ENCODE measurements at regions of chr17 and their contacts with region 1.

Region 1: GRCh38 chr17:40362696-40363110 is 1.8 kb downstream of the GJD3 start:
- DNase-seq: peak; percentile 95
- ATAC-seq: peak; percentile 91
- H3K4me3 Mint-ChIP-seq: peak overlapping the region; percentile 67
- H3K27ac Mint-ChIP-seq: no peak overlapping the region
- H3K4me1 Mint-ChIP-seq: peaks cover 20% of the 10 kb centered on the region
- H3K27me3 Mint-ChIP-seq: peaks cover 10% of the 10 kb centered on the region

Region 2: DNA sequence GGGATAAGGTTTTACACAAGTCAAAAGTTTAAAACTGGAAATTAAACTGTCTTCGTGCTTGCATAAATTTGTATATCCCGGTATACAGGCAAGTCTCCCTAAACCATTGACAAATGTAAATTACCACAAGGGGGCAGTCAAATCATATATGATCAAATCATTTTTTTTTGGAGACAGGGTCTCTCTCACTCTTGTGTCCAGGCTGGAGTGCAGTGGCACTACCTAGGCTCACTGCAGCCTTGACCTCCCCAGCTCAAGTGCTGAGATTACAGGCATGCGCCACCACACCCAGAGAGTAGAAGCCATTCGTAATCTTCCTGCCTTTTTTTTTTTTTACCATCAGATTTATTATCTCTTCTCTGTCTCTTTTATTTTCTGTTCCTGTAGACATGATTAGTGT is 36.5 kb after region 1 on chr17:
- CTCF ChIA-PET with region 1: interaction called, 3 read pairs
- POLR2A ChIA-PET with region 1: no interaction called
- intact Hi-C with region 1: loop called in 1 of 2 experiments (anchors 5 kb)
- DNase-seq: no peak
- ATAC-seq: peak; percentile 47
- H3K4me3 Mint-ChIP-seq: no peak overlapping the region
- H3K27ac Mint-ChIP-seq: no peak overlapping the region
- H3K4me1 Mint-ChIP-seq: peaks cover 12% of the 10 kb centered on the region
- H3K27me3 Mint-ChIP-seq: no peaks in the 10 kb centered on the region

Region 3: DNA sequence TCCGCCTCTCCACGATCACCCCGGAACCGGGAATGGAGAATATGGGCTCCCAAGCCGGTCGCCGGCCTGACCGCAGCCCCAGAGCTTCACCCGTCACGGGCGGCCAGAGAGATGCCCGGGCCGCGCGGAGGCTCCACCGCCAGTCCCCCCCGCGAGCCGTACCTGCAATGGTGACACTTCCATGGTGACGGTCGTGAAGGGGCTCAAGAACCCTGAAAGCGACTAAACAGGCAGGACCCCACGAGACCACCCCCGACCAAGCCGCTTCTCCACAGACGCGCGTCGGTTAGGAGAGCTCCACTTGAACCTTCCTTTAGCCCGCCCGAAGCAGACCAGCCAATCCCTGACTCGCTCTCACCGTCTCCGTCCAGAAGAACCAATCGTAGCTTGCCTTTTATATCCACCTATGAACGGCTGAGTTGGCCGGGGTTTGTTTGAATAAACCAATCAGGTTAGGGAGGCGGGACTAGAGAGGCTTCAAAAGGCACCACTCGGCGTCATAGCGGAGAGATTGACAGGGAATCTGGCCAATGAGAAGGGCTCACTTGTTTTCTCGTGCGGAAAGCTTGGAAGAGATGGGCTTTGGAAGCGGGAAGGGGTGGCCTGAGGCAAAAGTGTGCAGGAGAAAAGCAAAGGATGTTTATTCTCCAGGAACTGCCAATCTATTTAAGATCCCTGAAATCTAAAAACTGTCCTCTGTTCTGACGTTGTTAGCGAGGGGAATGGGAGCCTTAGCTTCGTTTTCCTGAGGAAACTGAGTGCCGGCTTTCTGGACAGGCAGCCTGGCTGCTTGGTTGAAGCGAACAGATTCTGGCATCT is 55.1 kb after region 1 on chr17 and contains the start of gene TOP2A:
- CTCF ChIA-PET with region 1: interaction called, 13 read pairs
- POLR2A ChIA-PET with region 1: interaction called, 6 read pairs
- intact Hi-C with region 1: loop called (anchors 1 kb)
- DNase-seq: peak; percentile 95
- ATAC-seq: peak; percentile 99
- H3K4me3 Mint-ChIP-seq: peak within 1 kb of the TSS; percentile 86
- H3K27ac Mint-ChIP-seq: peak within 1 kb of the TSS; percentile 89
- H3K4me1 Mint-ChIP-seq: peaks cover 24% of the 10 kb centered on the region
- H3K27me3 Mint-ChIP-seq: no peaks in the 10 kb centered on the region
- total RNA-seq, gene TOP2A: 245 to 322 TPM

Region 4: GRCh38 chr17:40480501-40481003 is 117.8 kb after region 1 on chr17:
- CTCF ChIA-PET with region 1: interaction called, 4 read pairs
- POLR2A ChIA-PET with region 1: no interaction called
- intact Hi-C with region 1: loop called (anchors 2 kb)
- DNase-seq: peak; percentile 95
- ATAC-seq: peak; percentile 94
- H3K4me3 Mint-ChIP-seq: peak overlapping the region; percentile 60
- H3K27ac Mint-ChIP-seq: peak overlapping the region; percentile 96
- H3K4me1 Mint-ChIP-seq: peaks cover 70% of the 10 kb centered on the region
- H3K27me3 Mint-ChIP-seq: no peaks in the 10 kb centered on the region

Region 5: DNA sequence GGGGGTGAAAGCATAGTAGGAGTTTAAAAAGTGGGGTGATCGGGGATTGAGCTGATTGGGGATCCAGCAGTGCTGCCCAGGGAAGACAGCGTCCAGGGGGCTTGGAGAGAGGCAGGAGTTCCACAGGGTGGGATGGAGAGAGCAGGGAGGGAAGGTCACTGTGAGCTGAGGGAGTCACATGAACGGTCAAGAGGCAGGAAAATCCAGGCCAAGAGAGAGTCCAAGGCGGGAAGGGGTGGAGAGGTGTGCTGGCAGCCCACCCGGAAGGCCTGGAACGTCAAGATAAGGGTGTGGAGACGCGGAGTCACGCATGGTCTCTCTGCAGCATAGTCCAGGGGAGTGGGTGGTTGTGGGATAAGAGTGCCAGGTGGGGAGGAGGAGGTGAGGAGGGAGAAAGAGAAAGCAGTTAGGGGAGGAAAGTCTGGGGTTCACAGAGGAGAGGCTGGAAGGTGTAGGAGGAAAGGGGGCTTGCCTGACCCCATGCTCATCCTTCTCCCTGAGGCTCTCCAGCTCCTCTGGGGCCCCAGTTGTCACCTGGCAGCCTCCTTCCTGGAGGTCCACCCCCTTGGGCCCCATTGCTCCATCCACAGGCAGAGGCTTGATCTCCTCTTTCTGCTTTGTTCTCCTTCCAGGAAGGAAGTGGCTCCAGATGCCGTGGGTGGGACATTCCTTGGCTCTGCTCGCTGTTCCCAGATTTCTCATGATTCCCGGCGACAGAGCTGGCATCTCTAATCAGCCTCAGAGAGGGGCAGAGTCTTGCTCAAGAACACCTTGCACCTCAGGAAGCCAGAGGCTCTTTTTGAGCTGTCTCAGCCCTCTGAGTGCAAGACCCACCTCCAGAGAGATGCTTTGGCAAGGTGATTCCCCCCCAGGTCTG is 173.8 kb after region 1 on chr17:
- CTCF ChIA-PET with region 1: interaction called, 150 read pairs
- POLR2A ChIA-PET with region 1: interaction called, 8 read pairs
- intact Hi-C with region 1: loop called (anchors 1 kb)
- DNase-seq: no peak
- ATAC-seq: no peak
- H3K4me3 Mint-ChIP-seq: no peak overlapping the region
- H3K27ac Mint-ChIP-seq: peak overlapping the region; percentile 71
- H3K4me1 Mint-ChIP-seq: peaks cover 92% of the 10 kb centered on the region
- H3K27me3 Mint-ChIP-seq: no peaks in the 10 kb centered on the region

Region 6: GRCh38 chr17:40622509-40622928 is 259.8 kb after region 1 on chr17:
- CTCF ChIA-PET with region 1: no interaction called
- POLR2A ChIA-PET with region 1: no interaction called
- intact Hi-C with region 1: loop called in 1 of 2 experiments (anchors 5 kb)
- DNase-seq: peak; percentile 41
- ATAC-seq: peak; percentile 25
- H3K4me3 Mint-ChIP-seq: no peak overlapping the region
- H3K27ac Mint-ChIP-seq: peak overlapping the region; percentile 77
- H3K4me1 Mint-ChIP-seq: peaks cover 61% of the 10 kb centered on the region
- H3K27me3 Mint-ChIP-seq: no peaks in the 10 kb centered on the region

Region 7: GRCh38 chr17:40818733-40819527 is 456.2 kb after region 1 on chr17:
- CTCF ChIA-PET with region 1: interaction called, 4 read pairs
- POLR2A ChIA-PET with region 1: no interaction called
- intact Hi-C with region 1: loop called in 1 of 2 experiments (anchors 5 kb)
- DNase-seq: peak; percentile 91
- ATAC-seq: peak; percentile 84
- H3K4me3 Mint-ChIP-seq: peak overlapping the region; percentile 95
- H3K27ac Mint-ChIP-seq: peak overlapping the region; percentile 97
- H3K4me1 Mint-ChIP-seq: peaks cover 25% of the 10 kb centered on the region
- H3K27me3 Mint-ChIP-seq: peaks cover 1% of the 10 kb centered on the region